ENCODE measurements at regions of chr10 and their contacts with region 1.

Region 1: DNA sequence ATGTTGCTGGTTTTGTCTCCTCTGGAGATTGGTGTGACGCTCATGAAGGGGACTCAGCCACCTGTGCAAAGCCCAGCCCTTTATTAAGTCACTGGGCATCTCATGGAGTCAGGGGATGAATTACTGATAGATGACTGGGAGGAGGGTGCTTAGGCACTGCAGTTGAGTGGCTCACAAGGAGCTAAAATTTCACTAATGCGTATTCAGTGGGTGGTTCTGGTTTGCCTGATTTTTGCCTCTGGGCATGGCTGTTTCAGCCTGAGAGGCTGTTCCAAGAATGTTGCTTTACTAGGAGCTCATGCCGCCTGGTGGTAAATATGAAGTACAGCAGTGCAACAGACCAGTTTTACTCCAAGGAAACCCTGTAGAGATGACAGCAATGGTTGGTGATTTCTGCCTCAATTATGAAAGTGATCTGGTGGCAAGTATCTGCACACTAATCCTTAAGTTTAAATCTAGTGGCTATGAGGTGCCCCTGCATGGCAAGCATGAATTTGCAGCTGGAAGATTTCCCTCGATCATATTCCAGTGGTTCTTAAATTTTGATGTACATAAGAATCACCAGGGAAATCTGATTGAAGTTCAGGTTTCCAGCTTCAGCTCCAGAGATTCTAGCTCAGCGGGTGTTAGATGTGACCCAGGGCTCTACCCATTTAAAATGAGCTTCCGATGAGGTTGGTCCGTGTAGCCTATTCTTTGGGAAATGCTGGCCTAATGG is 19.9 kb downstream of the ACTA2 start:
- DNase-seq: peak; percentile 36
- H3K4me3 Mint-ChIP-seq: no peak overlapping the region
- H3K27ac Mint-ChIP-seq: no peak overlapping the region
- H3K4me1 Mint-ChIP-seq: peaks cover 19% of the 10 kb centered on the region
- H3K27me3 Mint-ChIP-seq: no peaks in the 10 kb centered on the region
- CTCF ChIP-seq: peak; percentile 67

Region 2: DNA sequence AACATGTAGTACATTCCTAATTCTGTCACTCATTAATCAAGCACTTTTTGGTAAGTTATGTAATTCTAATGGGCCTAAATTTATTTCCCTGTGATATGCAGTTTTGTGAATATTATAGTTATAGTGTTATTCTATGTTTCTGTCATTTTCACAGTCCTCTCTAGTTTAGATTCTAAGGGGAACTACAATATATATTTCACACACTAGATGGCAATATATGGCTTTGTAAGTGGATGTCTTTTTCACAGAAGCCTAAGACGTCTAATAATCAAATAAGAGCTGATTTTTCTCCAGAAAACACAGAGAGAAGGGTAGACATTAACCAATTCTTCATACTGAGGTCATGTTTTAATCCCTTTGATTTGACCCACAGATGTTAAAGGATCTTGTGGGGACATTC is 367.6 kb before region 1 on chr10:
- CTCF ChIA-PET with region 1: interaction called, 6 read pairs
- intact Hi-C with region 1: loop called (anchors 5 kb)
- DNase-seq: no peak
- H3K4me3 Mint-ChIP-seq: no peak overlapping the region
- H3K27ac Mint-ChIP-seq: no peak overlapping the region
- H3K4me1 Mint-ChIP-seq: no peaks in the 10 kb centered on the region
- H3K27me3 Mint-ChIP-seq: no peaks in the 10 kb centered on the region
- CTCF ChIP-seq: no peak

Region 3: GRCh38 chr10:88835096-88835909 is 97.4 kb before region 1 on chr10:
- CTCF ChIA-PET with region 1: interaction called, 9 read pairs
- intact Hi-C with region 1: loop called (anchors 1 kb)
- DNase-seq: peak; percentile 80
- H3K4me3 Mint-ChIP-seq: no peak overlapping the region
- H3K27ac Mint-ChIP-seq: no peak overlapping the region
- H3K4me1 Mint-ChIP-seq: no peaks in the 10 kb centered on the region
- H3K27me3 Mint-ChIP-seq: no peaks in the 10 kb centered on the region
- CTCF ChIP-seq: peak; percentile 70

Region 4: GRCh38 chr10:88990384-88991160 is 57.9 kb after region 1 on chr10 and contains the start of gene FAS:
- CTCF ChIA-PET with region 1: interaction called, 12 read pairs
- intact Hi-C with region 1: loop called (anchors 1 kb)
- DNase-seq: peak; percentile 53
- H3K4me3 Mint-ChIP-seq: peak within 1 kb of the TSS; percentile 92
- H3K27ac Mint-ChIP-seq: peak within 1 kb of the TSS; percentile 54
- H3K4me1 Mint-ChIP-seq: peaks cover 17% of the 10 kb centered on the region
- H3K27me3 Mint-ChIP-seq: no peaks in the 10 kb centered on the region
- CTCF ChIP-seq: no peak
- total RNA-seq, gene FAS: 3.1 and 5.5 TPM in 2 replicates

Region 5: DNA sequence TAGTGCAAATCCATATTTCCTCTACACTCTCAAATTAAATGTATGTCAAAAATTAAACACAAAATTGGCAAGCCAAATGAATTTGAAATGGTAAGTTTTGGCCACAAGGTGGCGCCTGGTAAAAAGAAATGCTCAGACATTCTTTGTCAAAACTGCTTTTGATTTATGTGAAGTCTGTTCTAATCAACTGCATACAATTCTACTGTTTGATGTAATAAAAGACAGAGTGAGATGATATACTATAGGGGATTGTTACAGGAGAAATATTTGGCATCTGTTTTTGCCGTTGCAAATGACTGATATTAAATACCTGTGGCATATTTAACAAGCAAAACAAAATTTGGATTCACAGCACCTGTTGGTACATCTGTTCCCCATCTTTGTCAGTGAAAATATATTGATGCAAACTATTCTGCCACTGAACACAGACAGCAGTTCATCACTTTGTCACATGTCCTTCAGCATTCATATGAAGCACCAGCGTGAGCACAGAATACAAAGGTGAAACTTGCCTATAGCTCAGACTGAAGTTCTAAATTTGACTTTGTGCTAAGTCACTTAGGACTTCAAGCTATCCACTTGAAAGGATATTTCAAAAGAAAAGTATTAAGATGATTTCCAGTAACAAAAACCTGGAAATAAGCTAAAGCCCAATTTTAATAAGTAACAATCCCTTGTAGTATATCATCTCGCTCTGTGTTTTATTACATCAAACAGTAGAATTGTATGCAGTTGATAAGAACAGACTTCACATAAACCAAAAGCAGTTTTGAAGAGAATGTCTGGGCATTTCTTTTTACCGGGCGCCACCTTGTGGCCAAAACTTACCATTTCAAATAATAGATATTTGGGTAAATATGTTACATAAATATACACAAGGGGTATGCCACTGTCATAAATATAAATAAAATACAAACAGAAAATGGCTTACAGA is 284.6 kb after region 1 on chr10:
- CTCF ChIA-PET with region 1: no interaction called
- intact Hi-C with region 1: loop called (anchors 1 kb)
- DNase-seq: peak; percentile 47
- H3K4me3 Mint-ChIP-seq: no peak overlapping the region
- H3K27ac Mint-ChIP-seq: no peak overlapping the region
- H3K4me1 Mint-ChIP-seq: no peaks in the 10 kb centered on the region
- H3K27me3 Mint-ChIP-seq: no peaks in the 10 kb centered on the region
- CTCF ChIP-seq: peak; percentile 33

Measured in Calu3 (cell line).